H1 (cell line): ENCODE measurements at regions of chr19 and their contacts with region 1.

Region 1: GRCh38 chr19:51607920-51608562 is 22.2 kb downstream of the SIGLEC5 start:
- DNase-seq: peak; percentile 70 to 91
- H3K4me3 ChIP-seq: no peak overlapping the region
- H3K27ac ChIP-seq: no peak overlapping the region
- H3K4me1 ChIP-seq: no peaks in the 10 kb centered on the region
- H3K27me3 ChIP-seq: no peaks in the 10 kb centered on the region
- CTCF ChIP-seq: peak; percentile 91 to 92 (median 92)
- EP300 ChIP-seq: no peak
- POLR2A ChIP-seq: no peak
- RAD21 ChIP-seq: peak; percentile 60 to 68

Region 2: DNA sequence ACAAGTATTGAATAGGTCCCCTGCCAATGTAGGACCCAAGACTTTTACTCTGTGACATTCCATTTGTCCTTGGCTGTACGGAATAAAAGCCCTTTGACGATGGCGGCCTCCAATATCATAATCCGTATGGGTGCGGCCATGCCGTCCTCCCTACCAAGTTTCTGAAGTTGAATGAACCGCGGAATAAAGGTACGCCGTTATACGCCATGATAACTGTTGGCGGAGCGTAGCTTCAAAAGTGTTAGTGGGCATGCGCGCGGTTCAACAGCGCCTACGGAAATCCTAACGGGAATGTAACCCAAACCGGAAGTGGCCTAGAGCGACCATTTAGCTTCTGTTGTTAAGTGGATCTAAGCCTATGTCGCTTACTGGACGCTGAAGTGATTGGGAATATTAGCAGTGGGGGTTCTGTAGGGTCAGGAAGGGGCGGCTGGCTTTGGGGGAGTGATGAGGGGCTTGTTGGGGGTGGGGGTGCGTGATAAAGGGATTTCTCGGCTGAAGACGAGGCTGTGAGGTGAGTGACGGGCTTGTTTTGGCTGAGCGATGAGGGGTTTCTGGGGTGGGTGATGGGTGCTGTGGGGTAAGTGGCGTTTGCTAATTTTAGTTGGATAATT is 37.0 kb before region 1 on chr19 and contains the start of gene ZNF175:
- CTCF ChIA-PET with region 1: no interaction called
- POLR2A ChIA-PET with region 1: no interaction called
- DNase-seq: peak; percentile 91
- H3K4me3 ChIP-seq: peak within 1 kb of the TSS; percentile 64 to 90 (median 70)
- H3K27ac ChIP-seq: no peak within 1 kb of the TSS
- H3K4me1 ChIP-seq: peaks cover 0 to 3% (median 2%) of the 10 kb centered on the region in 4 experiments; a peak in 4 of 7 replicates
- H3K27me3 ChIP-seq: no peaks in the 10 kb centered on the region
- CTCF ChIP-seq: no peak
- EP300 ChIP-seq: no peak
- POLR2A ChIP-seq: peak in 1 of 2 experiments; percentile 53; a peak in 1 of 3 replicates
- RAD21 ChIP-seq: no peak
- total RNA-seq, gene ZNF175: 11.0 and 11.1 TPM in 2 replicates

Region 3: GRCh38 chr19:51593969-51594773 is 13.9 kb before region 1 on chr19:
- CTCF ChIA-PET with region 1: interaction called, 23 read pairs
- POLR2A ChIA-PET with region 1: interaction called, 5 read pairs
- DNase-seq: peak; percentile 87 to 94
- H3K4me3 ChIP-seq: peak overlapping the region; percentile 72 to 85 (median 76)
- H3K27ac ChIP-seq: no peak overlapping the region
- H3K4me1 ChIP-seq: peaks cover 0 to 7% (median 4%) of the 10 kb centered on the region in 4 experiments; a peak in 4 of 7 replicates
- H3K27me3 ChIP-seq: 0 out of 7 replicates have a peak, but pooled peaks cover 0 to 2% (median 0%) of the 10 kb centered on the region in 4 experiments
- CTCF ChIP-seq: no peak
- EP300 ChIP-seq: no peak
- POLR2A ChIP-seq: no peak
- RAD21 ChIP-seq: no peak

Region 4: DNA sequence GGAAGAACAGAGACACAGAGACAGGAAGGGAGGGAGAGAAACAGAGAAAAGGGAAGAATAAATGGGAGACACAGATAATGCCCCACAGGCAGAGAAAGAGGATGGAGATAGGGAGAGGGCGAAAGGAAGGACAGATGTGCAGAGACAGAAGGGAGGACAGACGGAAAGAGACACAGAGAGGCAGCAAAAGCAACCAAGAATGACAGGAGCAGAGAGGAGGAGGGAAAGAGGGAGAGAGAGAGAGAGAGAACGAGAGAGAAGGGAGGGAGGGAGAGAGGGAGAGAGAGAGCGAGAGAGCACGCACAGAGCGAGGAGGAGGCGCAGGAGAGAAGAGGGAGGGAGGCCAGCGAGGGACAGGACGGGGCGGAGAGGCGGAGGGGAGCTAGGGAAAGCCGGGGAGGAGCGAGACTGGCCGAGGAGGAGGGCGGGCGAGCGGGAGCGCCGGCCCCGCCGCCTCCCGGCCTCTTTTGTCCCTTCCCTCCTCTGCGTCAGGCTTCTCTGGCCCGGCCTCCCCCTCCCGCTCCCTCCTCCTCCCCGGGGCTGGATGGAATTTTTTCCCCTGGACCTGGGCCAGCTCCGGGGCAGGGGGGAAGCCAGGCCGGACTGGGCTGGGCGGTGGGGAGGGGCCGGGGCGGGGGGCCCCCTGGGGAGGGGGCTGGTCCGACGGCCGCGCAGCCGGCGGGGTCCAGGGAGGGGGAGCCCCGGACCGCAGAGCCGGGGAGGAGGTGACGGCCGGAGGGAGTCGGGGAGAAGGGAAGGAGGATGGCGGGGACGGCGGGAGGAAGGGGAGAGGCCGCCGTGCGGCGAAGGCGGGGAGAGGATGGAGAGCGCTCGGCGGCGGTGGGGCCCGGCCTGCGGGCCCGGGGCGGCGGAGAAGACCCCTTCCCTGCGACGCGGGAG is 80.9 kb after region 1 on chr19:
- CTCF ChIA-PET with region 1: no interaction called
- POLR2A ChIA-PET with region 1: no interaction called
- DNase-seq: peak in 1 of 2 experiments; percentile 80
- H3K4me3 ChIP-seq: peak overlapping the region; percentile 64 to 75 (median 66)
- H3K27ac ChIP-seq: no peak overlapping the region
- H3K4me1 ChIP-seq: peaks cover 0 to 18% (median 11%) of the 10 kb centered on the region in 4 experiments; a peak in 5 of 7 replicates
- H3K27me3 ChIP-seq: no peaks in the 10 kb centered on the region
- CTCF ChIP-seq: no peak
- EP300 ChIP-seq: no peak
- POLR2A ChIP-seq: no peak
- RAD21 ChIP-seq: no peak